ENCODE measurements at regions of chr4 and their contacts with region 1.

Region 1: GRCh38 chr4:140359562-140360427 is 13.7 kb upstream of the SCOC start:
- DNase-seq: peak; percentile 88
- ATAC-seq: peak; percentile 93
- H3K4me3 Mint-ChIP-seq: no peak overlapping the region
- H3K27ac Mint-ChIP-seq: no peak overlapping the region
- H3K4me1 Mint-ChIP-seq: no peaks in the 10 kb centered on the region
- H3K27me3 Mint-ChIP-seq: peaks cover 2% of the 10 kb centered on the region
- CTCF ChIP-seq: peak; percentile 89

Region 2: GRCh38 chr4:140012688-140013486 is 346.9 kb before region 1 on chr4:
- CTCF ChIA-PET with region 1: interaction called, 22 read pairs
- POLR2A ChIA-PET with region 1: no interaction called
- intact Hi-C with region 1: no loop called
- DNase-seq: peak; percentile 70
- ATAC-seq: peak; percentile 83
- H3K4me3 Mint-ChIP-seq: no peak overlapping the region
- H3K27ac Mint-ChIP-seq: no peak overlapping the region
- H3K4me1 Mint-ChIP-seq: peaks cover 8% of the 10 kb centered on the region
- H3K27me3 Mint-ChIP-seq: peaks cover 3% of the 10 kb centered on the region
- CTCF ChIP-seq: peak; percentile 64

Region 3: GRCh38 chr4:140330311-140330900 is 29.4 kb before region 1 on chr4:
- CTCF ChIA-PET with region 1: interaction called, 22 read pairs
- POLR2A ChIA-PET with region 1: no interaction called
- intact Hi-C with region 1: no loop called
- DNase-seq: no peak
- ATAC-seq: no peak
- H3K4me3 Mint-ChIP-seq: no peak overlapping the region
- H3K27ac Mint-ChIP-seq: no peak overlapping the region
- H3K4me1 Mint-ChIP-seq: peaks cover 3% of the 10 kb centered on the region
- H3K27me3 Mint-ChIP-seq: no peaks in the 10 kb centered on the region
- CTCF ChIP-seq: no peak

Region 4: GRCh38 chr4:140373328-140374129 is 13.7 kb after region 1 on chr4 and contains the start of gene SCOC:
- CTCF ChIA-PET with region 1: interaction called, 64 read pairs
- POLR2A ChIA-PET with region 1: interaction called, 4 read pairs
- intact Hi-C with region 1: no loop called
- DNase-seq: peak; percentile 99
- ATAC-seq: peak; percentile 97
- H3K4me3 Mint-ChIP-seq: no peak within 1 kb of the TSS
- H3K27ac Mint-ChIP-seq: peak within 1 kb of the TSS; percentile 67
- H3K4me1 Mint-ChIP-seq: peaks cover 39% of the 10 kb centered on the region
- H3K27me3 Mint-ChIP-seq: no peaks in the 10 kb centered on the region
- CTCF ChIP-seq: no peak
- total RNA-seq, gene SCOC: 44.6 to 44.7 TPM

Region 5: GRCh38 chr4:140400111-140400510 is 40.3 kb after region 1 on chr4:
- CTCF ChIA-PET with region 1: interaction called, 13 read pairs
- POLR2A ChIA-PET with region 1: no interaction called
- intact Hi-C with region 1: no loop called
- DNase-seq: no peak
- ATAC-seq: no peak
- H3K4me3 Mint-ChIP-seq: no peak overlapping the region
- H3K27ac Mint-ChIP-seq: no peak overlapping the region
- H3K4me1 Mint-ChIP-seq: no peaks in the 10 kb centered on the region
- H3K27me3 Mint-ChIP-seq: peaks cover 6% of the 10 kb centered on the region
- CTCF ChIP-seq: no peak

Region 6: GRCh38 chr4:140600408-140600807 is 240.6 kb after region 1 on chr4:
- CTCF ChIA-PET with region 1: interaction called, 10 read pairs
- POLR2A ChIA-PET with region 1: no interaction called
- intact Hi-C with region 1: no loop called
- DNase-seq: no peak
- ATAC-seq: no peak
- H3K4me3 Mint-ChIP-seq: no peak overlapping the region
- H3K27ac Mint-ChIP-seq: no peak overlapping the region
- H3K4me1 Mint-ChIP-seq: no peaks in the 10 kb centered on the region
- H3K27me3 Mint-ChIP-seq: peaks cover 11% of the 10 kb centered on the region
- CTCF ChIP-seq: no peak

Region 7: DNA sequence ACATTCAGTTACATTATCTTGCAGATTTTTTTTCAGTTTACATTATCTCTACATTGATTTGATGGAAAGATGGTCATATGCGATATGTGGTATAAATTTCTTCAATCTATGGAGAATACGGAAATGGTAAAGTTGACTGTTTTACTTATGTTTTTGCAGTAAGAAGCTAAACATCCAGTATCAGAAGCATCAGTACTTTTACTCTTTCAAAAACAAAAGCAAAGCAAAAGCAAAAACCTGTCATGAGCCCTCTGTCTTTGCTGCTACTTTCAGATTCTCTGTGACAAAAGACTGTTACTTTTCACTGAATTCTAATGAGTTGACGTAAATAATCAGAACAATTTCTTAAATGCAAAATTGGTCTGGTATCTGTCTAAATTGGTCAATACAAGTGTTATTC is 261.4 kb after region 1 on chr4:
- CTCF ChIA-PET with region 1: interaction called, 10 read pairs
- POLR2A ChIA-PET with region 1: no interaction called
- intact Hi-C with region 1: no loop called
- DNase-seq: no peak
- ATAC-seq: no peak
- H3K4me3 Mint-ChIP-seq: no peak overlapping the region
- H3K27ac Mint-ChIP-seq: no peak overlapping the region
- H3K4me1 Mint-ChIP-seq: no peaks in the 10 kb centered on the region
- H3K27me3 Mint-ChIP-seq: no peaks in the 10 kb centered on the region
- CTCF ChIP-seq: no peak

Measured in activated CD8-positive, alpha-beta T cell treated with anti-CD3 and anti-CD28 coated beads for 36 hours (primary cell).